ENCODE measurements at regions of chr21 and their contacts with region 1.

Region 1: DNA sequence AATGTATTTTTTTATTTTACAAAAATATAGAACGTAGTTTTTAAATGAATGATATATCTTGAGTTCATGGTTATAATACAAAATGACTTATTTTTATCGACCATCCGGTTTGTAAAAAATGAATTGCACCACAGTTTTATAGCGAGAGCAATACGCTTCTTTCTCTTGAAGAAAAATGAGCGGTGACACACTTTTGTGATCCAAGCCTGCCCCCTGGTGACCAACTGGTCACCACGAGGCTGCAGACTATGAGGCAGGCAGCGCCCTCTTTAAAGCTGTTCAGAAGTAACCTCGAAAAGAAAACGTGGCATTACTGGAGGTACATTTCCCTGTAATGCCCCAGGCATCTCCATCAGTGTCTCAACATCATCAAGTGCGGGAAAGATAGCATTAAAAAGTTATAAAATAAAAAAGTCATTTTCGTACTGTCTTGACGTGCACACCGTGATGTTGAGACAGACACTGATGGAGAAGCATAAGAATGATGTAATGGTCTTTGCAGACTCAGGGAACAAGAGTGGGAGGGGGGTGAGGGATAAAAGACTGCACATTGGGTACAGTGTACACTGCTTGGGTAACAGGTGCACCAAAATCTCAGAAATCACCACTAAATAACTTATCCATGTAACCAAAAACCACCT is 734.2 kb upstream of the ADAMTS5 start:
- DNase-seq: peak; percentile 75
- H3K4me3 ChIP-seq: no peak overlapping the region
- H3K27ac ChIP-seq: no peak overlapping the region
- H3K27me3 ChIP-seq: no peaks in the 10 kb centered on the region
- CTCF ChIP-seq: peak; percentile 86

Region 2: DNA sequence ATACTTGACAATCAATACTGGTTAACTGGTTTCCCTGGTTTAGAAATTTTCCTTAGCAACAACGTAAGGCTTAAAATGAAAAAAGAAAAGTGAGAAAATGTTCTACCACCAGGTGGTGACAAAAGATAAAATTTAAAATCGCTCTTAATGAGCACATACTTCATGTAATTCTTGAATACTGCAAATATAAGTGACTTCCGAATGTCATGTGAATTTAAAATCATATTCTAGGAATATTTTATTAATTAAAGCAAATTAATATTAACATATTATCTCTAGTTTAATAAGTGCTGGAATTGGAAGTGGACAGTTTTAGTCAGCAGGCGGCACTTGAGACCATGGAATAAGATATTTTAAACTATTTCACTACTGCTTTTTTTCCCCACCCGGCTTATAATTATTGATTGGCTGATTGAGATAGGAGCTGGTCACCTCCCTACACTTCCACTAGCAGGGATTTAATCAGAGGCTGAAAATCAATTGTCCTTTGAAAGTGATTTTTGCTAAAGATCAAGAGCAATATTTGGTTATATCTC is 850.9 kb before region 1 on chr21:
- CTCF ChIA-PET with region 1: interaction called, 35 read pairs
- POLR2A ChIA-PET with region 1: no interaction called
- DNase-seq: no peak
- H3K4me3 ChIP-seq: no peak overlapping the region
- H3K27ac ChIP-seq: no peak overlapping the region
- H3K27me3 ChIP-seq: no peaks in the 10 kb centered on the region
- CTCF ChIP-seq: peak; percentile 58

Region 3: GRCh38 chr21:27759091-27759659 is 58.1 kb after region 1 on chr21:
- CTCF ChIA-PET with region 1: no interaction called
- POLR2A ChIA-PET with region 1: no interaction called
- DNase-seq: no peak
- H3K4me3 ChIP-seq: no peak overlapping the region
- H3K27ac ChIP-seq: no peak overlapping the region
- H3K27me3 ChIP-seq: no peaks in the 10 kb centered on the region
- CTCF ChIP-seq: peak; percentile 23; the same call in 1 of the 2 replicates

Measured in AG04450 (cell line).